ENCODE measurements at regions of chr1 and their contacts with region 1.

Region 1: GRCh38 chr1:8423650-8424538 is 106.0 kb downstream of the SLC45A1 start:
- H3K4me3 Mint-ChIP-seq: peak overlapping the region; percentile 86
- H3K27ac Mint-ChIP-seq: peak overlapping the region; percentile 90
- H3K4me1 Mint-ChIP-seq: peaks cover 47% of the 10 kb centered on the region
- H3K27me3 Mint-ChIP-seq: no peaks in the 10 kb centered on the region

Region 2: GRCh38 chr1:8463144-8463927 is 39.4 kb after region 1 on chr1:
- intact Hi-C with region 1: loop called (anchors 5 kb)
- H3K4me3 Mint-ChIP-seq: peak overlapping the region; percentile 33
- H3K27ac Mint-ChIP-seq: peak overlapping the region; percentile 90
- H3K4me1 Mint-ChIP-seq: peaks cover 46% of the 10 kb centered on the region
- H3K27me3 Mint-ChIP-seq: no peaks in the 10 kb centered on the region

Region 3: DNA sequence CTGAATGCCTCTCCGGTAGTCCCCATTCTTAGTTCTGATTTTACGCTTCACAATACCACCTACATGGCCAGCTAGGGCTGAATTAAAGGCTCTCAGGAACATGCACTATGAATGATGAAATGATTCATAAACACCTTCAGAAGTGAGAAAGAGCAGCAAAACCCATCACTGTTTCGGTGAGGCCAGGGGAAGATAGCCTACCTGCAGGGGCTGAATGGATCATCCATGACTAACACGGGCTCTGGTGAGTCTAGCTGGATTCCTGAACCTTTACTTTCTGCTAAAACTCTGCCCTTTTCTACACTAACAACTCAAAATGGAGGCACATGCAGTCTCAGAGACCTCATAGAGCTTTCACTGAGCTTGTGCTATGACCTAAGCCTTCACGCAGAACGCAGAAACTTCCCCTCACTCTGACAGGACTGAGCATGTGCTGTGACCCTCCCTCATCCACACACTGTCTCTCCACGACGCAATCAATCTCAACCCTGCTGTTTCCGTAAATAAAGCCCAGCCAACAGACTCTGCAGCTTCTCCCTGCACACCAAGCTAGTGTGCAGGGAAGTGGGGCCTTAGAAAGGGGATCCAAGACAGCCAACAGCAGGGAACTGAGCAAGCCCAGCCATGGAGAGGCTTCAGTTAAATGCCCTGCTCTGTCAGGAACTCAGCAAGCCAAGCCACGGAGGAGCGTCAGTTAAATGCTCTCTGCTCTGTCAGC is 101.8 kb after region 1 on chr1:
- intact Hi-C with region 1: loop called (anchors 5 kb)
- H3K4me3 Mint-ChIP-seq: no peak overlapping the region
- H3K27ac Mint-ChIP-seq: no peak overlapping the region
- H3K4me1 Mint-ChIP-seq: peaks cover 14% of the 10 kb centered on the region
- H3K27me3 Mint-ChIP-seq: no peaks in the 10 kb centered on the region

Region 4: GRCh38 chr1:8702850-8703810 is 279.2 kb after region 1 on chr1:
- intact Hi-C with region 1: loop called (anchors 10 kb)
- H3K4me3 Mint-ChIP-seq: peak overlapping the region; percentile 76
- H3K27ac Mint-ChIP-seq: peak overlapping the region; percentile 80
- H3K4me1 Mint-ChIP-seq: peaks cover 27% of the 10 kb centered on the region
- H3K27me3 Mint-ChIP-seq: peaks cover 3% of the 10 kb centered on the region

Region 5: GRCh38 chr1:8878448-8879347 is 454.8 kb after region 1 on chr1 and contains the start of gene ENO1:
- intact Hi-C with region 1: loop called (anchors 10 kb)
- H3K4me3 Mint-ChIP-seq: peak within 1 kb of the TSS; percentile 95
- H3K27ac Mint-ChIP-seq: peak within 1 kb of the TSS; percentile 95
- H3K4me1 Mint-ChIP-seq: peaks cover 54% of the 10 kb centered on the region
- H3K27me3 Mint-ChIP-seq: no peaks in the 10 kb centered on the region

Measured in dendritic cell treated with granulocyte-macrophage colony-stimulating factor and Interleukin-4, amounts not matched to agents 40 ng/mL and 50 ng/mL, for 4 days (primary cell).